H1 (cell line): ENCODE measurements at regions of chr6 and their contacts with region 1.

Region 1: GRCh38 chr6:107657755-107658461 is 166.2 kb downstream of the SCML4 start:
- DNase-seq: no peak
- H3K4me3 ChIP-seq: no peak overlapping the region
- H3K27ac ChIP-seq: no peak overlapping the region
- H3K4me1 ChIP-seq: peaks cover 0 to 7% (median 6%) of the 10 kb centered on the region in 4 experiments; a peak in 4 of 7 replicates
- H3K27me3 ChIP-seq: no peaks in the 10 kb centered on the region; a peak in 1 of 7 replicates
- CTCF ChIP-seq: peak in 1 of 3 experiments; percentile 4; a peak in 1 of 4 replicates
- EP300 ChIP-seq: no peak
- POLR2A ChIP-seq: no peak
- RAD21 ChIP-seq: no peak; a peak in 1 of 4 replicates

Region 2: DNA sequence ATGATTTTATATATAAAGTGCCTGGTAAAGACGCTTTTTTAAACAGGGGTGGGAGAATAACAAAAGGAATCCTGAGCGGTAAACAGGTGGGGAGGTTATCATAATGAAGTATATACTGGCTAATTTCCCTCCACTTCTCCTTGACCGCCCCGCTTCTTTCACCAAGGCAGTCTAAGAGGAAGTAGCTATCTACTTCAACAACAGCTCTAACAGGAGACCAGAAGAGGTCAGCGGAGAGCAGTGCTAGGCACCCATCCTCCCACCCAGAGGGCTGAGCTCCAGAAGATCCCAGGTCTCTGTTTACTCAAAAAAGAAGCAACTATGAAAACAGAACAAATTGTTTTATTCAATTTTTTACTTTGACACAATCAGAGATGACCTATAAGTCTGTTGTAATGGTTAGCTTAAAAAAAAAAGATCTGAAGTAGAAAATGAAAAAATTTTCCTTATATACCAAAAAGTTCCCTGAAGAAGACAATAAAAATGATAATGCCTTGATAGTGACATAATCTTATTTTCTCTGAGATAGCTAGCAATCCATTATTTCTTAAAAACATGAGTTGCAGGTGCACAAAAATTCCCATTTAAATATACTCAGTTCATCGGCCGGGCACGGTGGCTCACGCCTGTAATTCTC is 339.7 kb before region 1 on chr6:
- CTCF ChIA-PET with region 1: interaction called, 10 read pairs
- POLR2A ChIA-PET with region 1: no interaction called
- DNase-seq: peak; percentile 27 to 51
- H3K4me3 ChIP-seq: no peak overlapping the region
- H3K27ac ChIP-seq: no peak overlapping the region
- H3K4me1 ChIP-seq: no peaks in the 10 kb centered on the region; a peak in 1 of 7 replicates
- H3K27me3 ChIP-seq: no peaks in the 10 kb centered on the region
- CTCF ChIP-seq: peak; percentile 53 to 79 (median 78)
- EP300 ChIP-seq: no peak
- POLR2A ChIP-seq: no peak
- RAD21 ChIP-seq: peak; percentile 91 to 93

Region 3: GRCh38 chr6:107489636-107490565 is 168.0 kb before region 1 on chr6 and contains the start of gene SOBP:
- CTCF ChIA-PET with region 1: interaction called, 14 read pairs
- POLR2A ChIA-PET with region 1: interaction called, 3 read pairs
- DNase-seq: peak in 1 of 2 experiments; percentile 73
- H3K4me3 ChIP-seq: peak within 1 kb of the TSS; percentile 63 to 91 (median 86)
- H3K27ac ChIP-seq: no peak within 1 kb of the TSS
- H3K4me1 ChIP-seq: peaks cover 0 to 14% (median 10%) of the 10 kb centered on the region in 4 experiments; a peak in 6 of 7 replicates
- H3K27me3 ChIP-seq: peaks cover 10 to 43% (median 27%) of the 10 kb centered on the region in 4 experiments
- CTCF ChIP-seq: no peak
- EP300 ChIP-seq: no peak
- POLR2A ChIP-seq: no peak
- RAD21 ChIP-seq: no peak
- total RNA-seq, gene SOBP: 6.2 and 7.4 TPM in 2 replicates

Region 4: DNA sequence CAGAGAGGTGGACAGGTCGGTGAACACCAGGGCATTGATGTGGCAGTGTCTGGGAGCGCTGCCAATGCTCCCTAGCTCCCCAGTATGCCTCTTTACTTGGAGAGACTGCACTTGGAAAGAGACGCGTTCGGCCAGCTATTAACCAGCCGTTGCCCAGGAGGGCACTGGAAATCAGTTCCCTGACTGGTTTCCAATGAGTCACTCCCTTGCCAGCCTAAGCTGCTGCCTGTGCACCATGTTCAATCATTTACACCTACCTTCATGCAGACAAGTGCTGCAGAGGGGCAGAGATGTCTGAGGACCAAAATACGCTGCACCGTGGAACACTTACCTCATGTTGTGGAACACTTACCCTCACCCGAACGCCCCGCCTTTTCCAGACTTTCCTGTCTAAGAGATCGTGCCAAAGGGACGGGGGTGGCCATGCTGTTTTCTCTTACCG is 16.4 kb before region 1 on chr6:
- CTCF ChIA-PET with region 1: interaction called, 13 read pairs
- POLR2A ChIA-PET with region 1: no interaction called
- DNase-seq: no peak
- H3K4me3 ChIP-seq: no peak overlapping the region
- H3K27ac ChIP-seq: no peak overlapping the region
- H3K4me1 ChIP-seq: no peaks in the 10 kb centered on the region
- H3K27me3 ChIP-seq: no peaks in the 10 kb centered on the region
- CTCF ChIP-seq: no peak
- EP300 ChIP-seq: no peak
- POLR2A ChIP-seq: no peak
- RAD21 ChIP-seq: no peak